GM12878 (cell line): ENCODE measurements at regions of chr3 and their contacts with region 1.

Region 1: DNA sequence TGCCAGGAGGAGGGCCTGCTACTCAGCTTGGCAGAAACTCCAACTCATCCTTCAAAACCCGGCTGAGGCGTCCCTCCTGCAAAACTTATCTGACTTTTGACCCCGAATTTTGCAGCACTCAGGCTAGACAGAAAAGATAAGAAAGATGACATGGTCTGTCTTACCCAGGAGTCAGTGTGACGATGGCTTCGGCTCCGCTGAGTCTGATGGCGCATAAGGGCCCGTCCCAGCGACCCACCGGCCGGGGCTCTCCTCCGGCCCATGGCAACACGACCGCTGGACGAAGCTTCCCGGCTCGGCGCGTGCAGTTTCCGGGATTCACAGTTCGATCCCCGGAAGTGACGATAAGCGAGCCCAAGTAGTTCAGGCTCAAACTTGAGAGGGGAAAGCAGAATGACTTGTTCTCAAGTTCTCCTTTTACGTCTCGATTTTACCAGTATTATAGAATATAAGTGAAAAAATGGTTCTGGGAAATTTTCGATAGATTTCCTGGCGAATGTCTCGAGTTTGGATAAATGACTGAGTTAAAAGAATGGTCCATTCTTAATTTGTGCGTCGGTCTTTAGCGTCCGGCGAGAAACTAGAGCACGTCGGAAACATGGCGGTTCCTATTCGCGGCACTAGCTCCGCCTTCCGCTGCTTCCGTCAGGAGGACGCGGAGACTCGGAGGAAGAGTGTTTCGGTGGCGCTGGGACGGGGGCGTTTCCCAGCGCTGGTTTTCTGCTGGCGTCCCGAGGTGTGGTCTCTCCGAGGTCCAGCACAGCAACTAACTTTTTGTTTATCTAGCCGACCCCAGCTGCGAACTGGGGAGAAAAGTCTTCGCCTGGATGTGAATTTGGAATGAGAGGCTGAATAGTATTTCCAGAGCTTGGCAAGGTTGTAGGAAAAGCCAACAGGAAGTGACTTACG is at the start of gene LSG1:
- DNase-seq: peak; percentile 76
- ATAC-seq: peak; percentile 94
- H3K4me3 ChIP-seq: peak within 1 kb of the TSS; percentile 93
- H3K27ac ChIP-seq: peak within 1 kb of the TSS; percentile 96
- H3K4me1 ChIP-seq: peaks cover 21% of the 10 kb centered on the region
- H3K27me3 ChIP-seq: no peaks in the 10 kb centered on the region
- CTCF ChIP-seq: no peak
- EP300 ChIP-seq: no peak
- POLR2A ChIP-seq: peak; percentile 79
- RAD21 ChIP-seq: no peak
- polyA plus RNA-seq, gene LSG1: 14.3 to 23.5 TPM

Region 2: GRCh38 chr3:194472290-194472920 is 199.7 kb before region 1 on chr3:
- CTCF ChIA-PET with region 1: interaction called, 13 read pairs
- POLR2A ChIA-PET with region 1: no interaction called
- RAD21 ChIA-PET with region 1: interaction called, 5 read pairs
- SMC1A ChIA-PET with region 1: interaction called, 3 read pairs
- in situ Hi-C with region 1: no loop called
- intact Hi-C with region 1: no loop called
- DNase-seq: no peak
- ATAC-seq: peak; percentile 87
- H3K4me3 ChIP-seq: no peak overlapping the region
- H3K27ac ChIP-seq: no peak overlapping the region
- H3K4me1 ChIP-seq: no peaks in the 10 kb centered on the region; the same call in 1 of the 2 replicates
- H3K27me3 ChIP-seq: no peaks in the 10 kb centered on the region
- CTCF ChIP-seq: peak; percentile 97 to 99 (median 99); a peak in 5 of 6 replicates
- EP300 ChIP-seq: no peak
- POLR2A ChIP-seq: no peak
- RAD21 ChIP-seq: peak; percentile 100

Region 3: GRCh38 chr3:194691481-194692283 is 19.5 kb after region 1 on chr3:
- CTCF ChIA-PET with region 1: interaction called, 29 read pairs
- POLR2A ChIA-PET with region 1: interaction called, 4 read pairs
- RAD21 ChIA-PET with region 1: interaction called, 9 read pairs
- SMC1A ChIA-PET with region 1: interaction called, 4 read pairs
- in situ Hi-C with region 1: no loop called
- intact Hi-C with region 1: no loop called
- DNase-seq: peak; percentile 85
- ATAC-seq: peak; percentile 86
- H3K4me3 ChIP-seq: peak overlapping the region; percentile 33; the same call in 1 of the 2 replicates
- H3K27ac ChIP-seq: peak overlapping the region; percentile 59
- H3K4me1 ChIP-seq: peaks cover 53% of the 10 kb centered on the region
- H3K27me3 ChIP-seq: peaks cover 0 to 5% of the 10 kb centered on the region in 2 experiments; a peak in 2 of 4 replicates
- CTCF ChIP-seq: no peak
- EP300 ChIP-seq: no peak
- POLR2A ChIP-seq: peak; percentile 45; the same call in 1 of the 2 replicates
- RAD21 ChIP-seq: no peak

Region 4: DNA sequence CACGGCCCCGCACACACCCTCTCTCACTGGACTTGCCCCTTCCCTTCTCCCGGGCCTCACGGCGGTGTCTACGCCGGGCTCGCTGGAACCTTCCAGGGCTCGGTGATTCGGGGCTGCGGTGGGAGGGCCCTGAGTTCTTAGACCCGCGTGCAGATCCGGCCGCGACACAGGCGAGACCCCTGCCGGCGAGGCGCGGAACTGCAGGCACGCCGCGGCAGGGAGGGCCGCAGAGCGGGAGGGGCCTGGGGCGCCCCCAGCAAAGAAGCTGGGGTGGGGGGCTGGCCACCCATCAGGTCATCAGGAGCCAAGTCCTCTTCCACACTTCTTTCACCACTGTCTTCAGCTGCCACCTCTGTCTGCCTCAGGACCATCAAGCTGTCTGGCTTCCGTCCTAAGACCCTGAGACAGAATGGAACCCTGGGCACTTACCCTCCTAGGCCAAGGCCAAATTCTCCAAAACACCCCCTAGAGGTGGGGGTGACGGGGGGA is 434.3 kb after region 1 on chr3:
- CTCF ChIA-PET with region 1: interaction called, 12 read pairs
- POLR2A ChIA-PET with region 1: no interaction called
- RAD21 ChIA-PET with region 1: interaction called, 6 read pairs
- SMC1A ChIA-PET with region 1: interaction called, 6 read pairs
- in situ Hi-C with region 1: no loop called
- intact Hi-C with region 1: no loop called
- DNase-seq: no peak
- ATAC-seq: peak; percentile 99
- H3K4me3 ChIP-seq: no peak overlapping the region
- H3K27ac ChIP-seq: no peak overlapping the region
- H3K4me1 ChIP-seq: no peaks in the 10 kb centered on the region; the same call in 1 of the 2 replicates
- H3K27me3 ChIP-seq: no peaks in the 10 kb centered on the region
- CTCF ChIP-seq: peak; percentile 92 to 99 (median 95)
- EP300 ChIP-seq: no peak
- POLR2A ChIP-seq: no peak
- RAD21 ChIP-seq: peak; percentile 93

Region 5: DNA sequence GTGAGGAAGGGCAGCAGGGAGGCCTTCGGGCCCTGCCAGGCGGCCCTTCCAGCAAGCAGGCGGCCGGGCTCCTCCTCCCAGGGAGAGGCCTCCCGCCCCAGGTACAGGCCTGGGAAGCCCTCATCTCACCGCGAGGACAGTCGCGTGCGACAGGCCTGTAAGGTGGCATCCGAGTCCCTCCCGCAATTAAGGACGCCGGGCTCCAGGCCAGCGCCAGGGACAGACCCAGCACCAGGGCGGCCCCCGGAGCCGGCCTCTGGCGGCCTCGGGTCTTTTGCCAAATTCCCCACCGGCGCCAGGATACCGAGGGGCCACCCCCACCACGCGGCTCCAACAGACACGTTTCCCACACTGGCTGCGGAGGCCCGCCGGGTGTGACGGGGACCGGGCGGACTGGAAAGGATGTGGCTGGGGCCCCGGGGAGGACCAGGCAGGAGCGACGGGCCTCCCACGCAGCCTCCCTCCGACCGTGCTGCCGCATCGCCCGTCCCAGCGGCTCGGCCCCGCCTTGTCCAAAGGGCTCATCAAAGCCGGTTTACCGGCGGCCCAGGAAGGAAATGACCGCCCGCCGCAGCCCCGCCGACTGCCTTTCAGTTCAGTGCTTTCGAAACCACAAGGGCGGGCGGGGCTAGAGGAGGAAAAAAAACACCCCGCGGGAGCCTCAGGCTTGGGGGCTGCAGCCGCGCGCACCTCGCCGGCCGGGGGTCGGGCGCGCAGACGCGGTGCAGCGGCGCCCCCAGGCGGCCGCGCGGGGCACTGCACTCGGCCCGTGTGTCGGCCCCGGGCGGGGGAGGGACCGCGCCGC is 587.5 kb after region 1 on chr3:
- CTCF ChIA-PET with region 1: interaction called, 38 read pairs
- POLR2A ChIA-PET with region 1: interaction called, 5 read pairs
- RAD21 ChIA-PET with region 1: interaction called, 11 read pairs
- SMC1A ChIA-PET with region 1: interaction called, 14 read pairs
- in situ Hi-C with region 1: no loop called
- intact Hi-C with region 1: loop called (anchors 2 kb)
- DNase-seq: peak; percentile 69
- ATAC-seq: peak; percentile 85
- H3K4me3 ChIP-seq: peak overlapping the region; percentile 77; the same call in 1 of the 2 replicates
- H3K27ac ChIP-seq: peak overlapping the region; percentile 85
- H3K4me1 ChIP-seq: peaks cover 21% of the 10 kb centered on the region
- H3K27me3 ChIP-seq: no peaks in the 10 kb centered on the region
- CTCF ChIP-seq: peak; percentile 54 to 77 (median 54); a peak in 5 of 6 replicates
- EP300 ChIP-seq: peak; percentile 64 to 82; a peak in 3 of 4 replicates
- POLR2A ChIP-seq: peak; percentile 85
- RAD21 ChIP-seq: peak; percentile 89

Region 6: DNA sequence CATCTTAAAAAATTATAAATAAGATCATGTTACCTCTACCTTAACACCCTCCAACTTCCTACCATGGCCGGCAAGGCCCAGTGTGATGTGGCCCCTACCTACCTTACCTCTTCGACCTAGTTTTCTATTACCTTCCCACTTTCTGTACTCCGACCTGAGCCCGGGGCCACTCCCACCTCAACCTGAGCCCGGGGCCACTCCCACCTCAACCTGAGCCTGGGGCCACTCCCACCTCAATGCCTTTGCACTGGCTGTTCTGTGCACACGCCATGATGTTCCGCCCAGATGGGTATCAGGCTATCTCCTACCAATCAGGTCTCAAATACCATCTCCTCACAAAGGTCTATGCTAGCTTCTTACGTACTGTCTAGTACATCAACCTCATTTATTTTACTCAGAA is 665.6 kb after region 1 on chr3:
- CTCF ChIA-PET with region 1: no interaction called
- POLR2A ChIA-PET with region 1: no interaction called
- RAD21 ChIA-PET with region 1: no interaction called
- SMC1A ChIA-PET with region 1: no interaction called
- in situ Hi-C with region 1: no loop called
- intact Hi-C with region 1: no loop called
- DNase-seq: no peak
- ATAC-seq: no peak
- H3K4me3 ChIP-seq: no peak overlapping the region
- H3K27ac ChIP-seq: no peak overlapping the region
- H3K4me1 ChIP-seq: no peaks in the 10 kb centered on the region
- H3K27me3 ChIP-seq: no peaks in the 10 kb centered on the region
- CTCF ChIP-seq: no peak
- EP300 ChIP-seq: no peak
- POLR2A ChIP-seq: no peak
- RAD21 ChIP-seq: no peak

Region 7: GRCh38 chr3:195542698-195543499 is 870.7 kb after region 1 on chr3 and contains the start of gene PPP1R2:
- CTCF ChIA-PET with region 1: interaction called, 6 read pairs
- POLR2A ChIA-PET with region 1: interaction called, 3 read pairs
- RAD21 ChIA-PET with region 1: interaction called, 4 read pairs
- SMC1A ChIA-PET with region 1: interaction called, 5 read pairs
- in situ Hi-C with region 1: loop called (anchors 5 kb)
- intact Hi-C with region 1: no loop called
- DNase-seq: peak; percentile 64
- ATAC-seq: peak; percentile 88
- H3K4me3 ChIP-seq: peak within 1 kb of the TSS; percentile 77
- H3K27ac ChIP-seq: peak within 1 kb of the TSS; percentile 60
- H3K4me1 ChIP-seq: peaks cover 15% of the 10 kb centered on the region
- H3K27me3 ChIP-seq: no peaks in the 10 kb centered on the region
- CTCF ChIP-seq: no peak
- EP300 ChIP-seq: no peak
- POLR2A ChIP-seq: peak; percentile 99
- RAD21 ChIP-seq: no peak
- polyA plus RNA-seq, gene PPP1R2: 10.5 to 22.7 TPM